Endothelial cell of umbilical vein (primary cell): ENCODE measurements at regions of chr1 and their contacts with region 1.

Region 1: DNA sequence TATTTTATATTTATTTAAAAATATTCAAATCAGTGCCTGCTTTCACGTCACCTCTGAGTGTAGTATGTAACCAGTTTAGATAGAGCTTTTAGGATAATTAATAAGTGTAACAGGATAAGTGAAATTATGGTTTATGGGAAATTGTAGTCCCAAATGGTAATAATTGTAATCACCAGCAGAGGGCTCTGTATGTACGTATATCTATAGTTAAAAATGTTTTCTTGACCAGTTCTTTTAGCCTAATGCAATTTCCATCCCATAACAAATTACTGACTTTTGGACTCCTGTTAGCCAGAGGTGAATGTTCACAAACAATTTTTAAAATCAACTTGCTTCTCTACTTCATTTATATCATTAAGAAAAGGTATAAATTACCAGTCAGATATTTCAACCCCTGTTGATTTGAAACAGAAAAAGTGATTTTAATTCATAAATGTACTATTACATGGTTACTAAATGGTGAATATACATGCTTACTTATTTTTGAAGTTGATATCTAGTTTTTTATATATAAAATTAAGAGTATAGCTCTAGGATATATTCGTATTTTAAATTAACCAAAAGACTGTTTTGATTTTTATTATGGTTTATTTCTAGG is 25.3 kb downstream of the SLC30A7 start:
- DNase-seq: peak; percentile 81
- H3K4me3 ChIP-seq: no peak overlapping the region
- H3K27ac ChIP-seq: no peak overlapping the region
- H3K4me1 ChIP-seq: peaks cover 11% of the 10 kb centered on the region
- H3K27me3 ChIP-seq: no peaks in the 10 kb centered on the region
- CTCF ChIP-seq: peak; percentile 24
- POLR2A ChIP-seq: no peak

Region 2: DNA sequence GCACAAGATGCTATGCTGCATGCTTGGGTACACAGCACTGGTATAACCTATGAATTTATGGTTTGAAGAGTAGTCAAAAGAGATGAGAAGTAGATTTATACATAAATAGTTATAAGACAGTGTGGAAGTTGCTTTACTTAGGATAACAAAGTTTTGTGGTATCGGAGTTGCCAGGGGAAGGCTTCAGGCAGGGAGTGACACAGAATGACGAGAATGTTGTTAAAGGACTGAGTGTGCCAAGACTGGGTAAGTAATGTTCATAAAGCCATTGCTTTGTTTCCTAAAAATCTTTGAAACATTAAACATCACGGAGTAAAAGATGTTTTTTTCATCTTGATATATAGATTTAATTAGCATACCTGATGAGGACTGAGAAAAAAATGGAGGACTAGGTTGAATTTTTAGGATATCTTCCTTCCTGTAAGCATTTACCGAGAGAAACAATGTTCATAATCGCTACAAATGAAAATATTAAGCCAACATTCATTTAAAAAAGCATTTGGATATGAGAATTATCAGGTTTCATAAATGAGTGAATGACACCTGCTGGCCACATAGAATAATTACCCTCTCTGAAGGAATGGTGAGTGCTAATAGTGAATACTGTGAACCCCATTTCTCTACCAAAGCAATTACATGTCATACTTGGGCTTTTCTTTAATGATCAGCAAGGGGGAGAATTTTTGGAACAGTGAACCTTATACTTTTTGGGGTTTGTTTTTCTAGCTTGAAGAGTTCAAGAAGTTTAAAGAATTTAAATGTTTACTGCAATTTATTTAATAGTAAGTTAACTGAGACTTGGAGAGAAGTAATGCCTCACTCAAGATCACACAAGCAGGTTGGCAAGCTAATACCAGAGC is 54.9 kb before region 1 on chr1:
- CTCF ChIA-PET with region 1: no interaction called
- POLR2A ChIA-PET with region 1: no interaction called
- dilution Hi-C with region 1: no loop called
- intact Hi-C with region 1: no loop called
- DNase-seq: peak; percentile 78
- H3K4me3 ChIP-seq: peak overlapping the region in 1 of 3 experiments; percentile 33
- H3K27ac ChIP-seq: peak overlapping the region; percentile 70
- H3K4me1 ChIP-seq: peaks cover 17% of the 10 kb centered on the region
- H3K27me3 ChIP-seq: no peaks in the 10 kb centered on the region
- CTCF ChIP-seq: peak; percentile 44 to 49
- POLR2A ChIP-seq: no peak

Region 3: DNA sequence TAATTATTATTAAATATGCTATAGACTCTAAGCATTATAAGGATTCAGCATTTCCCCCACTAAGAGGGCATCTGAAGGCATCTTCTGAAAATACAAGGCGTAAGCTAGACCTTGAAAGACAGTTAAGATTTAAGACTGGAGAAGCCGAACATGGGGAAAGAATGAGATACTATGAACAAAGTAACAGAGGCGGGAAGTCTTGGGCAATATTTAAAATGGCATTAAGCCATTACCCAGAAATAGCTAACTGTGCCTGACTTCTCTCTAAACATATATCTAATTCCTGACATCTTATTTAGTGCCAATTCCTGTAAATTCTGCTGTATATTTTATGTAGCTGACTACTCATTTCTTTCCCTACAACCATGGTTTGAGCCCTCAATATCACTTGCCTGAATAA is 83.5 kb after region 1 on chr1:
- CTCF ChIA-PET with region 1: no interaction called
- POLR2A ChIA-PET with region 1: no interaction called
- dilution Hi-C with region 1: no loop called
- intact Hi-C with region 1: loop called (anchors 5 kb)
- DNase-seq: no peak
- H3K4me3 ChIP-seq: no peak overlapping the region
- H3K27ac ChIP-seq: no peak overlapping the region
- H3K4me1 ChIP-seq: peaks cover 38% of the 10 kb centered on the region
- H3K27me3 ChIP-seq: no peaks in the 10 kb centered on the region
- CTCF ChIP-seq: no peak
- POLR2A ChIP-seq: no peak

Region 4: DNA sequence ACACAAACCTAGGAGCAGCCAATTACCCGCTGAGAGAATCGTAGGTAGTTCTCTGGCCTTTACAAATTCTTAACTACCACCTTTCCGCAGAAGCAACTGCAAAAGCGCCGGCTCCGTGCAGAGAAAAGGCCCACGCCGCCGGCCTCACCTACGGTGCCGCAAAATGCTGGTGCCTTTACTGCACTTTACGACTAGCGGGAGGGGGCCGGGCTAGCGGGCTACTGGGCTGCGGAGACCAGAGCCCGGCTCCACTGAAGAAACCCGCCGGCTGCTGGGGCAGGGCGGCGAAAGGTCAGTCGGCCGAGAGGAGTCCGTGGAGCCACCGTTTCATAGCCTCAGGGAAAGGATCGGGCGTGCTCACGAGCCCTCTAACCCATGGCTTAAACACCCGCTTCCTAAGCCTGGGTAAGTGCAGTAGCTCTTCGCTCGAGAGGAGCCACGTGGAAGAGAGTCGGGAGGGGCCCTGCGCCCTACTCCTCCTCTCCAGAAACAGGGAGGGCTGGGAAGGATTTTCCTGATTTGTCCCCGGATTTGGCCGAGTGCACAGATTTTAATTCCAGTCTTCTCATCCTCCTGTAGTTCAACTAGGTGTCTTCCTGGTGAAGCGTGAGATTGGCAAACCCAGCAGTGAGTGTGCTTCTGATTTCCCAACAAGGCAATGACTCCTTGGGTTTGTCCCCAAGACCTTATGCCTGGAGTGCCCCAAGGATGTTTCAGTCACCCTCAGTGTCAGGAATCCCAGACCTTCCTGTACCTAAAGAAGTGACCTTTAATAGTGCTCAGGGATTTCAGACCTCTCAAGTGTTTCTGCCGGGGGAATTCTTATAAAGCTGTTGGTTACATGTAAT is 104.7 kb after region 1 on chr1 and contains the start of gene DPH5:
- CTCF ChIA-PET with region 1: no interaction called
- POLR2A ChIA-PET with region 1: no interaction called
- dilution Hi-C with region 1: no loop called
- intact Hi-C with region 1: loop called (anchors 5 kb)
- DNase-seq: peak; percentile 93
- H3K4me3 ChIP-seq: peak within 1 kb of the TSS; percentile 70 to 96 (median 76)
- H3K27ac ChIP-seq: peak within 1 kb of the TSS; percentile 75
- H3K4me1 ChIP-seq: peaks cover 22% of the 10 kb centered on the region
- H3K27me3 ChIP-seq: no peaks in the 10 kb centered on the region
- CTCF ChIP-seq: no peak
- POLR2A ChIP-seq: peak; percentile 93
- total RNA-seq, gene DPH5: 31.3 and 37.2 TPM in 2 replicates

Region 5: DNA sequence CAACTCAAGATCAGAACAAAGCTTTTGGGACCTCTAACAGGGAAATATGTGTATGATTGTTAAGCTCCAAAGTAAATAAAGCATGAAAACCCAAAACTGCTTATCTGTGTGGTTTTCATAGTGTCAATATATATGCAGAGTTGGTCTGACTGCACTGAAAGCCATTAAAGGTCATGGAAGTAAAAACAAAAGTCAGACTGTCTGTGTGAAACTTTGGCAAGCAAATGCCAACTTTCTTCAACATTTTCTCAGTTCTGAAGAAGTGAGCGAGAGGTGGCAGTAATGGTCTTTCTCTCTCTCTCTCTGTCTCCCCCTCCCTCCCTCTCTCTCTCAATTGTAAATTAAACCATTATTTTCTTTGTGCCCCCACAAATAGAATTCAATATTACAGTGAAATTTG is 215.5 kb after region 1 on chr1:
- CTCF ChIA-PET with region 1: interaction called, 15 read pairs
- POLR2A ChIA-PET with region 1: interaction called, 5 read pairs
- dilution Hi-C with region 1: no loop called
- intact Hi-C with region 1: loop called (anchors 1 kb)
- DNase-seq: peak; percentile 91
- H3K4me3 ChIP-seq: no peak overlapping the region
- H3K27ac ChIP-seq: no peak overlapping the region
- H3K4me1 ChIP-seq: peaks cover 28% of the 10 kb centered on the region
- H3K27me3 ChIP-seq: no peaks in the 10 kb centered on the region
- CTCF ChIP-seq: peak; percentile 33 to 43
- POLR2A ChIP-seq: no peak

Region 6: GRCh38 chr1:101221945-101222429 is 300.8 kb after region 1 on chr1:
- CTCF ChIA-PET with region 1: no interaction called
- POLR2A ChIA-PET with region 1: no interaction called
- dilution Hi-C with region 1: no loop called
- intact Hi-C with region 1: no loop called
- DNase-seq: no peak
- H3K4me3 ChIP-seq: no peak overlapping the region
- H3K27ac ChIP-seq: no peak overlapping the region
- H3K4me1 ChIP-seq: no peaks in the 10 kb centered on the region
- H3K27me3 ChIP-seq: no peaks in the 10 kb centered on the region
- CTCF ChIP-seq: no peak
- POLR2A ChIP-seq: no peak

Region 7: DNA sequence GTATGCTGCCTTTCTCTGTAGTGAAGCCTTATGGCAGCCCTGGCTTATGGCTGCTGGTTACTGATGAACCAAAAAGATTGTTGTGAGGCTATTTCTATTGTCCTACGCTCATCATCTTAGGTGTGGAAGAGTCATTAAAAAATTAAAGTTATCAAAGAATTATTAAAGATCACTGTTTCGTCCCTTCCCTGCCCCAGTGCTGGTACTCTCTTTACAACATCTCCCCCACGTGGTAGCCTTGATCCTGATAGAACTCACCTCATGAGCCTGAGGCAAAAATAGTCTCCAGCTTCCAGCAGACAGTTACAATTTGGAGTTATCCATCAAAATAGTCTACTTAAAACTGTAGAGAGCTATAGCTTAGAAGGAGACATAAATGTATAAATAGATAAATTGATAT is 517.2 kb after region 1 on chr1:
- CTCF ChIA-PET with region 1: interaction called, 5 read pairs
- POLR2A ChIA-PET with region 1: no interaction called
- dilution Hi-C with region 1: no loop called
- intact Hi-C with region 1: loop called (anchors 5 kb)
- DNase-seq: peak; percentile 59
- H3K4me3 ChIP-seq: no peak overlapping the region
- H3K27ac ChIP-seq: no peak overlapping the region
- H3K4me1 ChIP-seq: no peaks in the 10 kb centered on the region
- H3K27me3 ChIP-seq: peaks cover 6 to 8% of the 10 kb centered on the region in 2 experiments
- CTCF ChIP-seq: peak; percentile 44 to 55
- POLR2A ChIP-seq: no peak